ENCODE measurements at regions of chr2 and their contacts with region 1.

Region 1: GRCh38 chr2:12579018-12579417 is 137.7 kb upstream of the TRIB2 start:
- DNase-seq: no peak
- ATAC-seq: no peak
- H3K4me3 ChIP-seq: no peak overlapping the region
- H3K4me3 Mint-ChIP-seq: no peak overlapping the region
- H3K27ac ChIP-seq: no peak overlapping the region
- H3K27ac Mint-ChIP-seq: no peak overlapping the region
- H3K4me1 ChIP-seq: no peaks in the 10 kb centered on the region
- H3K4me1 Mint-ChIP-seq: peaks cover 0 to 24% (median 2%) of the 10 kb centered on the region in 3 donors
- H3K27me3 ChIP-seq: no peaks in the 10 kb centered on the region
- H3K27me3 Mint-ChIP-seq: no peaks in the 10 kb centered on the region

Region 2: DNA sequence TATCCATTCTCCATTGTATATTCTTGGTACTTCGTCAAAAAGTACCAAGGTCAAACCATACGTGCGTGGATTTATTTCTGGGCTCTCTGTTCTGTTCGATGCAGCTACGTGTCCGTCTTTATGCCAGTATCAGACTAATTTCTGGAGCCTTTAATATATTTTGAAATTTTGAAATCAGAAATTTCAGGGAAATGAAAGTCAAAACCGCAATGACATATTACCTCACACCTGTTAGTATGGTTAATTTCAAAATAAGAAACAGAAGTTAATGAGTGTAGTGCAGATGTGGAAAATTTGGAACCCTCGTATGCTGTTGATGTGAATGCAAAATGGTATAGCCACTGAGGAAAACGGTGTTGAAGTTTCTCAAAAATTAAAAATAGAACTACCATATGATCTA is 18.4 kb before region 1 on chr2:
- CTCF ChIA-PET with region 1: interaction called, 3 to 11 read pairs
- POLR2A ChIA-PET with region 1: no interaction called
- DNase-seq: no peak
- ATAC-seq: no peak
- H3K4me3 ChIP-seq: no peak overlapping the region
- H3K4me3 Mint-ChIP-seq: no peak overlapping the region
- H3K27ac ChIP-seq: no peak overlapping the region
- H3K27ac Mint-ChIP-seq: no peak overlapping the region
- H3K4me1 ChIP-seq: peaks cover 10 to 12% of the 10 kb centered on the region in 2 experiments
- H3K4me1 Mint-ChIP-seq: peaks cover 34 to 64% (median 54%) of the 10 kb centered on the region in 3 donors
- H3K27me3 ChIP-seq: no peaks in the 10 kb centered on the region
- H3K27me3 Mint-ChIP-seq: no peaks in the 10 kb centered on the region

Region 3: DNA sequence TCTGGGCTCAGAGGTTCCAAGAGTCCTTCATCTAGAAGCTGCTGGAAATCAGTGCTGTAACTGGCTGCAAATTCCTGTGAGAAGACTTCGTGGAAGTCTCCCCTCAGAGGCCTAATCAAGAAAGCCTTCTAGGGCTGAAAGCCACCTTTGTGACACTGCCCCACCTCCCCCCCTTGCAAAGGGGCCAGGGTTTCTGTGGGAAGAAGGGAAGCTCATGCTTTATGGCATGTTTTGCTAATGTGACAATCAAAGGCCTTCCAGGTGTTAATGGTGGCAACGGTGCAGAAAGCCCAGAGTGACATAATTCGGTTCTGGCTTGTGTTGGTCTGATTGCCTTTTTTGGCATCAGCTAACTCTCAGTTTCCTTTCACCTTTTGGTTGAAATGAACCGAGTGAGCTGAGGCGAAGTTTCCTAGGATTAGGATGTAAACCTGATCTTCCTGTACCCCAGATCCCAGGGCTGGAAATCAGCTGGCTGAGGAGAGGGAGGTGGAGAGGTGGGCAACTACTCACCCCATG is 10.8 kb after region 1 on chr2:
- CTCF ChIA-PET with region 1: no interaction called
- POLR2A ChIA-PET with region 1: no interaction called
- DNase-seq: no peak
- ATAC-seq: no peak
- H3K4me3 ChIP-seq: no peak overlapping the region
- H3K4me3 Mint-ChIP-seq: no peak overlapping the region
- H3K27ac ChIP-seq: no peak overlapping the region
- H3K27ac Mint-ChIP-seq: no peak overlapping the region
- H3K4me1 ChIP-seq: peaks cover 12 to 19% of the 10 kb centered on the region in 2 experiments
- H3K4me1 Mint-ChIP-seq: peaks cover 35 to 45% (median 36%) of the 10 kb centered on the region in 3 donors
- H3K27me3 ChIP-seq: no peaks in the 10 kb centered on the region
- H3K27me3 Mint-ChIP-seq: no peaks in the 10 kb centered on the region

Region 4: GRCh38 chr2:12636837-12637581 is 58.0 kb after region 1 on chr2:
- CTCF ChIA-PET with region 1: no interaction called
- POLR2A ChIA-PET with region 1: no interaction called
- DNase-seq: no peak
- ATAC-seq: no peak
- H3K4me3 ChIP-seq: no peak overlapping the region
- H3K4me3 Mint-ChIP-seq: no peak overlapping the region
- H3K27ac ChIP-seq: no peak overlapping the region
- H3K27ac Mint-ChIP-seq: peak overlapping the region in 1 of 2 donors; percentile 19
- H3K4me1 ChIP-seq: peaks cover 3 to 11% of the 10 kb centered on the region in 2 experiments
- H3K4me1 Mint-ChIP-seq: peaks cover 20 to 42% (median 34%) of the 10 kb centered on the region in 3 donors
- H3K27me3 ChIP-seq: no peaks in the 10 kb centered on the region
- H3K27me3 Mint-ChIP-seq: no peaks in the 10 kb centered on the region

Measured in T-cell (primary cell).